Tibial artery (tissue), 4 donors: ENCODE measurements at regions of chr9 and their contacts with region 1.

Region 1: DNA sequence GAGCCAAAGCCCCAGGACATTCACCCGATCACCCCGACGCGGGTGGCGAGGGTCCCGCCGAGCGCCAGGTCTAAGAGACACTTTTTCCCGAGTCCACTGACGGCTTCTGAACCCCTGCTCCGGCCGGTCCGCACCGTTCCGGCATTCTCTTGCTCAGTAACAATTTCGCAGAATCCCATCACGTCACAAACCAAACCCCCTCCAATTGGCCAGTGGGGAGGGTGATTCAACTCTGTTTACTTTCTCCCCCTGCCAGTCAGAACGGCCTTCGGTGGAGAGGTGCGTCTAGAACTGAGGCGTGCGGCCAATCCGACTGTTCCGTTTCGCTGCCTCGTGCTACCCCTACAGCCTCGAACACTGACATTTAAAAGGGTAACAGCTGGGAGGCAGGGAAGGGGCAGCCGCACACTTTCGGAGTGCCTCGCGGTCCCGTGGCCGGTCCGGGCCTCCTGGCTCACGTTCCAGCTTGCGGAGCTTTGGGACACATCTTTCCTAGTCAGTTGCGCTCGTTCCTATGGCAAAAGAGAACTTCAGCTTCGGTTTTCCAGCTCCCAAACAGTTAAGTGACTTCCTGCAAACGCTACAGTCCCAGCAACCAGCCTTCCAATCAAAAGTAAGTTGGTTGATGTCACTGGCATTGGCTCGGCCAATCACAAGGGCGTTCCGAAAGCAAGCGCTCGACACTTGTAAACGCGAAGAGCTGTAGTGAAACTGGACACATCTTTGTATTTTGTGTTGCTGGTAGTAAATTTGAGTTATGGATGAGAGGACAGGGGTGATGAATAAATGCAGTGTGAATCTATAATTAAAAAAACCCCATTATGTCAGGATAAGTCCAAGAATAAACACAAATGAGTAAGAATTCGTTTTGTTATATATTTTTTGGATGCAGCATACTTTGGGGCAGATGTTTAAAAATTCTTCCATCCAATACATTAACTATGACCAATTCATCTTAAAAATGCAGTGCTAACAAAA is at the start of gene KLF9:
- DNase-seq: peak; percentile 98 to 99
- H3K4me3 ChIP-seq: peak within 1 kb of the TSS; percentile 94 to 97
- H3K27ac ChIP-seq: peak within 1 kb of the TSS; percentile 100
- H3K4me1 ChIP-seq: peaks cover 0 to 52% (median 28%) of the 10 kb centered on the region in 4 donors
- H3K27me3 ChIP-seq: peaks cover 0 to under 1% of the 10 kb centered on the region in 2 donors
- CTCF ChIP-seq: peak in 1 of 2 experiments; percentile 5

Region 2: DNA sequence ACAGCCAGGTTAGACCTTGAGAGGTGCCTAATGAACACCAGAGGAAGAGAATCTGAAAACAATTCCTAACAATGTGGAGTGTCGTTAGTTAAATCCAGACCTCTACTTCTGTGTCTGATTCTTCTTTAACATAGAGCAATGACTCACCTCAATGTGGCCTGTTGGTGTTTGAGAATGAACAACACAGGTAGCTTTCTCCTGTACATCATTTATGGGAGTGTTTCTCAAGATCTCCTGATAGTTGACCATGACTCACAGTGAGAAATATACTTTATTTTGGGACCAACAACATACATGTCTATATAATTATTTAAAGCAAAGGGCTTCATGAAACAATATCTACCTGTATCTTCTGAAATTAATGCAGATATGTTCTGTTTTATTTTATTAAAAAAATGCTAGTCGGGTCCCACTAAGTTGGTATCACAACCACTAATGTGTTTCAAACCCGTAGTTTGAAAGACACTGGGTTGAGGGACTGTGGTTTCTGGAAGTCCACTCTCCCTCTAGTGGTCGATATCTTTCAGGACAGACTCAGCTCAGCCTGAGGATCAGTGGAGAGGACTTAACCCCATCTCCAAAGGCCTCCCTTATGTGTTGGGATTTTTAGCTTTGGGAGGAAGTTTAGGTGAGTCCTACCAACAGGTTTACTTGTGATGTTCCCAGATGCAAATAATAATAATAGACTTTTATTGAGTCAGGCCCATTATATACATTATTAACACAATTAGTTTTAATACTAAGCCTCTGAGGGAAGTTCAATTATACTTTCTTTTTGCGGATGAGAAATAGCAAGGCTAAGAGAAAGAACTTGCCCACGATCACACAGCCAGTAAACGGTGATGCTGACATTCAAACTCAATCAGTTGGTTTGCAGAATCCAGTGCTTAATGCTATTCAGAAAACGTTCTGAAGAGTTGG is 70.4 kb after region 1 on chr9:
- intact Hi-C with region 1: no loop called
- DNase-seq: no peak
- H3K4me3 ChIP-seq: no peak overlapping the region
- H3K27ac ChIP-seq: peak overlapping the region; percentile 81 to 93
- H3K4me1 ChIP-seq: peaks cover 8 to 88% (median 54%) of the 10 kb centered on the region in 4 donors
- H3K27me3 ChIP-seq: no peaks in the 10 kb centered on the region
- CTCF ChIP-seq: peak; percentile 72 to 74

Region 3: DNA sequence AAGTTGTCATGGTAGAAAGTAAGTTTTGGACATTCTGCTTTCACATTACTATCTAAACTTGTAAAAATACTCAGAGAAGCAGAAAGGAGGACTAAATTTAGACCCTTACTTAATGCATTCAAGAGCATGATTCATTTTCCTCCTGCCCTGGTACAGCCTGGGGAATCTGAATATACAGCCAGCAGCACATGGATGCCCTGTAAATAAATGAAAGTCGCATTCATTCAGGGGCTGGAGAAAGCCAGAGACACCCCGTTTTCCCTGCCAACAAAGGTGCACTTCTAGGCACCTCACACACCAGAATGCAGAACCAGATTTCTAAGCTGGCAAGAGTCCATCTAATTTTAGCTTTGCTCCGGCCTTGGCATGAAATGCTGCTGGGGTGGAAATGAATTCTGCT is 173.1 kb after region 1 on chr9:
- intact Hi-C with region 1: loop called (anchors 5 kb)
- DNase-seq: peak in 1 of 2 donors; percentile 52
- H3K4me3 ChIP-seq: no peak overlapping the region
- H3K27ac ChIP-seq: peak overlapping the region; percentile 79
- H3K4me1 ChIP-seq: peaks cover 0 to 70% (median 38%) of the 10 kb centered on the region in 4 donors
- H3K27me3 ChIP-seq: no peaks in the 10 kb centered on the region
- CTCF ChIP-seq: peak in 1 of 2 experiments; percentile 13

Region 4: DNA sequence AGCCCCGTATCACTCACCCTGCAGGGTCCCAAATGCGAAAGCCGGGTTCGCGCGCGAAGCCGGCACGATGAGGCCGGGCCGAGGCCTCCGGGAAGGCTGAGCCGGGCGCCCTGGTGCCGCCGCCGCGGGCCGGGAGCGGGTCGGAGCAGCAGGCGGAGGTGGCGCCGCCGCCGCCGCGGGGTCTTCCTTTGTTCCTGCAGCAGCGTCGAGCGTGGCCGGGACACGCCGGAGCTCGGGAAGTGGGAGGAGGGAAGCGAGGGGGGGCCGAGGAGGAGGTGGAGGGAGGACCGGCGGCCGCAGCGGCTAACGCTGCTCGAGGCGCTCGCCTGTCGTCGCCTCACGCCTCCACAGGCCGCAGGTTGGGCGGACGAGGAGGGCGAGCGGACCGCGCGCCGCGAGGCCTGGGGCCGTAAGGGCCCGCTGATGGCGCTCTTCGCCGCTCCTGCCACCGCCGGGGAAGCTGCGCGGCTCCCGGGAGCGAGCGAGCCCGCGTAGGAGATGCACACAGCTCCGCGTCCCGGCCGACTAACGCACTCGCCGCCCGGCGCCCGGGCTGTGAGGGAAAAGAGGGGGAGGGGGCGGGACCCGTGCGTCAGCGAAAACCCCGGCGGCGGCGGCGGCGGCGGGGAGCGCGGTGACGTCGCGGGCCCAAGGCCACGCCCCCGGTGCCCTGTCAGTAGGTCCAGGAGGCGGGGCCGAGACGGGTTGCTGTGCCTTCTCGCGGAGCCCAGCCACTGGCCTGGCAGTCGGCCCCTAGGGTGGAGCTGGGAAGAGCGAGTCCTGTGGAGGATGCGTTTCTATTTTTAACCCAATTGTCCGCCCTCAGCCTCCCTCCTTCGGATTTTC is 1950.8 kb after region 1 on chr9 and contains the start of gene ZFAND5:
- intact Hi-C with region 1: loop called (anchors 5 kb)
- DNase-seq: peak; percentile 99 to 100
- H3K4me3 ChIP-seq: peak within 1 kb of the TSS; percentile 89 to 97
- H3K27ac ChIP-seq: peak within 1 kb of the TSS; percentile 99 to 100
- H3K4me1 ChIP-seq: peaks cover 0 to 28% (median 16%) of the 10 kb centered on the region in 4 donors
- H3K27me3 ChIP-seq: no peaks in the 10 kb centered on the region
- CTCF ChIP-seq: no peak